CD4-positive, alpha-beta memory T cell (primary cell): ENCODE measurements at regions of chr22 and their contacts with region 1.

Region 1: DNA sequence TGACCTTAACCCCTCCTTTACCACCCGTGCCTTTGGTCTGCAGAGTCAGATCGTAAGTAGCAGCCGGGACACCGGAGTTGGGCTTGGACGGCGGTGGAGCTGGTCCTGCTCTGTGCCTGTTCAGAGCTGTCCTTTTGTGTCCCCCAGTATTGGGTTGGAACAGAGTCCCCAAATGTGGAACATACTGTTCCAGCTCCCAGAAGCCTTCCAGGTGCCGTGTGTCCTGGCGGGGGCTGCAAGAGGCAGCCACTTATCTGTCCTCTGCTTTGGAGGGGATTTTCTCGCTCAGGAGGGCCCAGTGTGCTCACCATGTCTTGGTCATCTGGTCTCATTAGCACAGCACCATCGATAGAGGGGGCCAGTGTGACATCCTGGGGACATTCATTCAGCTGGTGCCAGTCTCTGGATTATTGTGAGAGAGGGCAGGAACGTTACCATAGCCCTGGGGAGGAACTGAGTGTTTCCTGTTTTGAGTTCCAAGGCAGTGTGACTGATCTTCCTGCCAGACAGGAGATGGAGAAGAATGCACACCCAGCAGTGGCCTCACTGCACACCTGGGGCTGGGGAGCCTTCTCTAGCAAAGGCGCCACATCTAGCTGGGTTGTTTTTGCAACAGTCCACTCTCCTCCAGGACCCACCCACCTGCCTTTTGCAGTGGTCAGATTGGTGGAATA is 12.4 kb downstream of the CRELD2 start:
- DNase-seq: peak in 3 of 5 donors; percentile 30 to 45 (median 40)
- H3K4me3 ChIP-seq: no peak overlapping the region
- H3K4me3 Mint-ChIP-seq: peak overlapping the region; percentile 4 to 80 (median 55)
- H3K27ac ChIP-seq: no peak overlapping the region
- H3K27ac Mint-ChIP-seq: peak overlapping the region; percentile 54 to 93 (median 88)
- H3K4me1 ChIP-seq: peaks cover 51% of the 10 kb centered on the region
- H3K4me1 Mint-ChIP-seq: peaks cover 20 to 49% (median 31%) of the 10 kb centered on the region in 4 donors
- H3K27me3 ChIP-seq: no peaks in the 10 kb centered on the region
- H3K27me3 Mint-ChIP-seq: no peaks in the 10 kb centered on the region

Region 2: GRCh38 chr22:49894322-49895054 is 36.4 kb before region 1 on chr22:
- CTCF ChIA-PET with region 1: no interaction called
- POLR2A ChIA-PET with region 1: no interaction called
- intact Hi-C with region 1: no loop called
- DNase-seq: no peak
- H3K4me3 ChIP-seq: no peak overlapping the region
- H3K4me3 Mint-ChIP-seq: no peak overlapping the region
- H3K27ac ChIP-seq: no peak overlapping the region
- H3K27ac Mint-ChIP-seq: peak overlapping the region in 3 of 7 donors; percentile 73 to 94 (median 78)
- H3K4me1 ChIP-seq: no peaks in the 10 kb centered on the region
- H3K4me1 Mint-ChIP-seq: peaks cover 11 to 15% (median 11%) of the 10 kb centered on the region in 4 donors
- H3K27me3 ChIP-seq: no peaks in the 10 kb centered on the region
- H3K27me3 Mint-ChIP-seq: no peaks in the 10 kb centered on the region

Region 3: DNA sequence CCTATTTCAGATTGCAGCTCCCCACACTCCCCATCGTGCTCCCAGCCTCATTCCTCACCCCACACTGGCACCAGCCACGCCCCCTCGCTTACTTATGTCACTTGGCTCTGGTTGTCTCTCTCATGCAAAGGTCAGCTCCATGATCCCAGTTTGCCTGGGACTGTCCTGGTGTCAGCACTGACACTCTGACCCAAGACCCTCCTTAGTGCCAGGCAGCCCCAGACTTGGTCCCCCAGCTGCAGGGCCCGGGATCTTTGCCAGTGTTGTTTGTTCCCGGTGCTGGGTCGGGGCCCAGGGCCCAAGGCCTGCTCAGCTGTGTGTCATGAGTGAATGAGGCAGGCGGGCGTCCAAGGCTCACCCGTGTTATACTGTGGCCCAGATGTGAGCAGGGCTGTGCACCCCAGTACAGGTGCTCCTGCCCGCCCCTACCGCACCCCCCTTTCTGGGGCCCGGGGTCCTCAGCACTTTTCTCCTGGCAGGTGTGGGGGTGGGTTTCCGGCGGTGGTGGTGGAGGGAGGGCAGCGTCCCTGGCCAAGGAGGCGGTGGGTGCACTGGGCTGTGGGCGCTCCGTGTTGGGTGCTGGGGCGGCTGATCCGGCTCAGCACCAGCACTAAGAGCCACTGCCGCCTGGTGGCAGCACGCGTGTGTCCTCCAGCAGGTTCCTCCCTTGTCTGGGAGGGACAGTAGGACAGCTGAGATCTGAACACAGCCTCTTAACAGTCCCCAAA is 62.2 kb after region 1 on chr22:
- CTCF ChIA-PET with region 1: interaction called, 31 read pairs
- POLR2A ChIA-PET with region 1: interaction called, 11 read pairs
- intact Hi-C with region 1: loop called (anchors 1 kb)
- DNase-seq: peak; percentile 47 to 69 (median 57)
- H3K4me3 ChIP-seq: no peak overlapping the region
- H3K4me3 Mint-ChIP-seq: peak overlapping the region in 3 of 8 donors; percentile 38 to 64 (median 60)
- H3K27ac ChIP-seq: no peak overlapping the region
- H3K27ac Mint-ChIP-seq: peak overlapping the region in 5 of 7 donors; percentile 15 to 74 (median 50)
- H3K4me1 ChIP-seq: peaks cover 9% of the 10 kb centered on the region
- H3K4me1 Mint-ChIP-seq: peaks cover 3 to 12% (median 6%) of the 10 kb centered on the region in 4 donors
- H3K27me3 ChIP-seq: no peaks in the 10 kb centered on the region
- H3K27me3 Mint-ChIP-seq: peaks cover 4% of the 10 kb centered on the region in 2 donors

Region 4: GRCh38 chr22:50030297-50031188 is 99.7 kb after region 1 on chr22:
- CTCF ChIA-PET with region 1: interaction called, 56 read pairs
- POLR2A ChIA-PET with region 1: interaction called, 18 read pairs
- intact Hi-C with region 1: loop called (anchors 1 kb)
- DNase-seq: peak; percentile 81 to 87 (median 84)
- H3K4me3 ChIP-seq: no peak overlapping the region
- H3K4me3 Mint-ChIP-seq: no peak overlapping the region
- H3K27ac ChIP-seq: no peak overlapping the region
- H3K27ac Mint-ChIP-seq: no peak overlapping the region
- H3K4me1 ChIP-seq: peaks cover 18% of the 10 kb centered on the region
- H3K4me1 Mint-ChIP-seq: peaks cover 3 to 15% (median 8%) of the 10 kb centered on the region in 4 donors
- H3K27me3 ChIP-seq: no peaks in the 10 kb centered on the region
- H3K27me3 Mint-ChIP-seq: peaks cover 0 to 8% of the 10 kb centered on the region in 2 donors

Region 5: DNA sequence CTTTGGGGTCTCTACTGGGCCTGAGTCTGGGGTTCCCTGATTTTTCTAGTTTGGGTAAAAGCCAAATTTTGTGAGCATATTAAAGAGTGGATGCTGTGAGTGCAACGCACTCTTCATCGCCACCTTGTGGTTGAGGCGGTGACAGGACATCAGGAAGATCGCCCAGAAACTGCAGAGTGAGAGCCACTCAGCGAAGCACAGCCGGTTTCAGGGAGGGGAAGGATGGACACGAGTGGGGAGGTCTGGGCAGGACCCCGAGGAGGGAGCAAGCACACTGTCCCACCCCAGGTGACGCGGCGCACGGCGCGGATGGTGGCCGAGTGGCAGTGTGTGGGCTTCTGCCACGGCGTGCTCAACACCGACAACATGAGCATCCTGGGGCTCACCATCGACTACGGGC is 279.0 kb after region 1 on chr22:
- CTCF ChIA-PET with region 1: no interaction called
- POLR2A ChIA-PET with region 1: no interaction called
- intact Hi-C with region 1: loop called (anchors 1 kb)
- DNase-seq: peak; percentile 66 to 75 (median 71)
- H3K4me3 ChIP-seq: no peak overlapping the region
- H3K4me3 Mint-ChIP-seq: peak overlapping the region in 1 of 8 donors; percentile 33
- H3K27ac ChIP-seq: no peak overlapping the region
- H3K27ac Mint-ChIP-seq: peak overlapping the region; percentile 61 to 94 (median 80)
- H3K4me1 ChIP-seq: peaks cover 8% of the 10 kb centered on the region
- H3K4me1 Mint-ChIP-seq: peaks cover 15 to 40% (median 20%) of the 10 kb centered on the region in 4 donors
- H3K27me3 ChIP-seq: no peaks in the 10 kb centered on the region
- H3K27me3 Mint-ChIP-seq: no peaks in the 10 kb centered on the region